Right ventricle myocardium inferior (tissue), 1 donor: ENCODE measurements at regions of chr1 and their contacts with region 1.

Region 1: DNA sequence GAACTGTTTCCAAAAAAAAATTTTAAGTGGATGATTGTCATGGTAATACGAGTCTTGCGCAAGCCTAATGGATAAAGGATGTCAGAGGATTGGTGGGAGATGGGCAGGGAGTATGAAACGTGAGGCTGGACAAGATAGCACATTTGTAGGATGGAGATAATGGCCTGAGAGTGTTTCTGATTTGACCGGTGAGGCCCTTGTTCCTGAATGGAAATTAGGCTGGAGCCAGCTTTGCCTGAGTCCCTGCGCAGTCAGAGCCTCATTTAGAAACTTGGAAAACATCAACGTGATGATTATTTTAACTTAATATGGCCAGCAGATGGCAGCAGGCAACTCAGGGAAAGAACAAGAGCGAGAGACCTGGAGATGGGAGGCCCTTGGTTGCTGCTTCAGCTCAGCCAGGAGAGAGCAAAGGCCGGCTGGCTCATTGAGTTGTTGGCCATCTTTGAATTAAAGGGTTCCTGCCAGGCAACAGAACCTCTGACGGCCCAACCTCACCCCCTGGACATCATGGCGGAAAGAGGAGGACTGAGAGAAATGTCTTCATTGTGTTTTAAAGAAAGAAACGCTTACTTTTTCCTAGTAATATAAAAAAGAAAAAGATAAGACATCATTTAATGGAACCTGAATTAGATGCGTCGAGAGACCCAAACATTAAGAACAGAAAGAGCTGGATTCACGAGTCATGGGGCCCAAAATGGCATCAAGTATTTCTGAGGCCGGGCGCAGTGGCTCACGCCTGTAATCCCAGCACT is 80.3 kb downstream of the SELENOF start:
- DNase-seq: peak; percentile 75
- ATAC-seq: peak; percentile 91

Region 2: GRCh38 chr1:86753700-86754099 is 79.9 kb before region 1 on chr1:
- intact Hi-C with region 1: no loop called
- DNase-seq: no peak
- ATAC-seq: no peak

Region 3: GRCh38 chr1:86965827-86966182 is 132.2 kb after region 1 on chr1:
- intact Hi-C with region 1: loop called (anchors 1 kb)
- DNase-seq: no peak
- ATAC-seq: no peak

Region 4: DNA sequence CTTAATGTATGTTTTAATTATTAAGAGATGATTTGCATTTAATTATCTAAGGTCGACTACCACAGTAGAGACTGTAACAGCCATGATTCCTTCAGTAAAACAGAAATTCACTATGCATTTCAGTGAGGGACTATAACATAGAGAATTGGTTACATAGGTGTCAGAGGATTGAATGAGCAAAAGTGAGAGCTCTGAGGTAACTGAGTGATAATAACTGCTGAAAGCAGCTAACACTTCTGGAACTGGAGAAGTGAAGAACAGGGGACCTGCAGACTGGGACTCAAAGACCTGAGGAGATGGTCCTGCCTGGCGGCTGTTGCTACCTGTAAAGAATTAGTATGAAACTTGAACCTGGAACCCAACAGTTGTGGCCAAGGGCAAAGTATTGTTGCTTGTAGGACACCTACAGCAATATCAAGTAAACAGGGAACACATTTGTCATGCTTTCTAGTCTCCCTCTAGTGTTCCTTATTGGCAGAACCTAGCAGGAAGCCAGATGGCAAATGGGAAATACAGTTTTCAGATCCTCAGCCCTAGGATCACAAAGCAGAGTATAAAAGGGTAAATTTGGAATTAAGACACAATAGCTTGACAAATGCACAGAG is 191.4 kb after region 1 on chr1:
- intact Hi-C with region 1: loop called (anchors 2 kb)
- DNase-seq: no peak
- ATAC-seq: no peak